A673 (cell line): ENCODE measurements at regions of chr15 and their contacts with region 1.

Region 1: GRCh38 chr15:47066392-47066791 is 650.9 kb upstream of the SEMA6D start:
- DNase-seq: no peak
- H3K4me3 ChIP-seq: no peak overlapping the region
- H3K27ac ChIP-seq: no peak overlapping the region
- H3K4me1 ChIP-seq: no peaks in the 10 kb centered on the region
- H3K27me3 ChIP-seq: no peaks in the 10 kb centered on the region
- CTCF ChIP-seq: no peak

Region 2: GRCh38 chr15:46088486-46089445 is 977.6 kb before region 1 on chr15:
- CTCF ChIA-PET with region 1: no interaction called
- POLR2A ChIA-PET with region 1: no interaction called
- intact Hi-C with region 1: no loop called
- DNase-seq: peak; percentile 90
- H3K4me3 ChIP-seq: no peak overlapping the region
- H3K27ac ChIP-seq: peak overlapping the region; percentile 67
- H3K4me1 ChIP-seq: peaks cover 19% of the 10 kb centered on the region
- H3K27me3 ChIP-seq: no peaks in the 10 kb centered on the region
- CTCF ChIP-seq: no peak

Region 3: DNA sequence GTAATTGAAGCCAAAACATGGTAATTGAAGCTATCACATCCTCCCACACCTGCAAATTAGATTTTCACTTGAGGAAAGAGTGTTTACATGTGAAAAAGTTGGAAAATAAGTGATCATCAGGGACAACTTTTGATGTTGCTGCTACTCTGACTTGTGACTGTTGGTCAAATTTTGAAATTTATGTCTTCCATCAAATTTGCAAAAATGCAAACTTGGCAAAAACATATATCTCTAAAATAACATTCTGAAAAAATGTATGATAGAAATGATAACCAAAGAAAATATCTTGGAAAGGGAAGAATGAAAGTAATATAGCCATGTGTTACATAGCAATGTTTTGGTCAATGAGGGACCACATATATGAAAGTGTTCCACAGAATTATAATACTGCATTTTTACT is 52.9 kb before region 1 on chr15:
- CTCF ChIA-PET with region 1: no interaction called
- POLR2A ChIA-PET with region 1: no interaction called
- intact Hi-C with region 1: no loop called
- DNase-seq: no peak
- H3K4me3 ChIP-seq: no peak overlapping the region
- H3K27ac ChIP-seq: no peak overlapping the region
- H3K4me1 ChIP-seq: no peaks in the 10 kb centered on the region
- H3K27me3 ChIP-seq: no peaks in the 10 kb centered on the region
- CTCF ChIP-seq: no peak

Region 4: GRCh38 chr15:47139965-47140364 is 73.6 kb after region 1 on chr15:
- CTCF ChIA-PET with region 1: no interaction called
- POLR2A ChIA-PET with region 1: no interaction called
- intact Hi-C with region 1: loop called (anchors 10 kb)
- DNase-seq: no peak
- H3K4me3 ChIP-seq: no peak overlapping the region
- H3K27ac ChIP-seq: no peak overlapping the region
- H3K4me1 ChIP-seq: no peaks in the 10 kb centered on the region
- H3K27me3 ChIP-seq: no peaks in the 10 kb centered on the region
- CTCF ChIP-seq: no peak

Region 5: GRCh38 chr15:47177177-47177576 is 110.8 kb after region 1 on chr15:
- CTCF ChIA-PET with region 1: no interaction called
- POLR2A ChIA-PET with region 1: no interaction called
- intact Hi-C with region 1: no loop called
- DNase-seq: no peak
- H3K4me3 ChIP-seq: no peak overlapping the region
- H3K27ac ChIP-seq: no peak overlapping the region
- H3K4me1 ChIP-seq: no peaks in the 10 kb centered on the region
- H3K27me3 ChIP-seq: no peaks in the 10 kb centered on the region
- CTCF ChIP-seq: no peak

Region 6: GRCh38 chr15:47794266-47794914 is 728.0 kb after region 1 on chr15:
- CTCF ChIA-PET with region 1: no interaction called
- POLR2A ChIA-PET with region 1: no interaction called
- intact Hi-C with region 1: no loop called
- DNase-seq: no peak
- H3K4me3 ChIP-seq: no peak overlapping the region
- H3K27ac ChIP-seq: no peak overlapping the region
- H3K4me1 ChIP-seq: no peaks in the 10 kb centered on the region
- H3K27me3 ChIP-seq: no peaks in the 10 kb centered on the region
- CTCF ChIP-seq: no peak